ENCODE measurements at regions of chr22 and their contacts with region 1.

Region 1: GRCh38 chr22:39532215-39533071 is at the start of gene RPS19BP1:
- DNase-seq: peak; percentile 100
- H3K4me3 Mint-ChIP-seq: peak within 1 kb of the TSS; percentile 97
- H3K27ac Mint-ChIP-seq: peak within 1 kb of the TSS; percentile 91
- H3K4me1 Mint-ChIP-seq: peaks cover 50% of the 10 kb centered on the region
- H3K27me3 Mint-ChIP-seq: peaks cover 3% of the 10 kb centered on the region
- total RNA-seq, gene RPS19BP1: 96.2 and 96.9 TPM in 2 replicates

Region 2: GRCh38 chr22:39343259-39344048 is 189.0 kb before region 1 on chr22:
- intact Hi-C with region 1: loop called (anchors 2 kb)
- DNase-seq: peak; percentile 88
- H3K4me3 Mint-ChIP-seq: no peak overlapping the region
- H3K27ac Mint-ChIP-seq: no peak overlapping the region
- H3K4me1 Mint-ChIP-seq: peaks cover 4% of the 10 kb centered on the region
- H3K27me3 Mint-ChIP-seq: peaks cover 39% of the 10 kb centered on the region

Region 3: DNA sequence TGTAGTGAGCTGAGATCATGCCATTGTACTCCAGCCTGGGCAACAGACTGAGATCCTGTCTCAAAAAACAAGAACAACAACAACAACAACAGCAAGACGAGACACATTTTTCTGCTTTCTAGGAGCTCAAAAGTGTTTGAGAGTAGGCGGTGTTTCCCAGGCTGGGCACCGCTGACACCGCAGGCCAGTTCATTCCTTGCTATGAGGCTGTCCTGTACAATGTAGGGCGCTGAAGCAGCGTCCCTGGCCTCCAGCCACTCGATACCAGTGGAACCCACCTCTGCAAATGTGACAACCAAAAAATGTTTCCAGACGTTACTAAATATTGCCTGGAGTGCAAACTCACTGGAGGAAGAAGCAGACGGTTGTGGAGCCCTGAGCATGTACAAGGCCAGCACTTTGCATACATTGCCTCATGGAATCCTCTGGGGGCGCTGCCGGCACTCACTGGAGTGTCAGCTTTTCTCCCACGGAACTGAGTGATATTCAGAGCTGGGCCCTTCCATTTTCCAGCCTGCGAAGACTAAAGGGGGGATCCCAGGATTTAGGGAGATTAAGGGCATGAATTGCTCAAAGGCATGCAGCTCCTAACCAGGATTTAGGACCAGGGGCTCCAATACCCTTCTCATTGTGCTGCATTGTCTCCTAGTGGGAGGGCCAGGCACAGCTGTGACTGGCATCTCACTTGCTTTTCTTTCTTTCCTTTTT is 36.2 kb before region 1 on chr22:
- intact Hi-C with region 1: loop called (anchors 1 kb)
- DNase-seq: peak; percentile 88
- H3K4me3 Mint-ChIP-seq: no peak overlapping the region
- H3K27ac Mint-ChIP-seq: no peak overlapping the region
- H3K4me1 Mint-ChIP-seq: peaks cover 16% of the 10 kb centered on the region
- H3K27me3 Mint-ChIP-seq: peaks cover 3% of the 10 kb centered on the region

Region 4: DNA sequence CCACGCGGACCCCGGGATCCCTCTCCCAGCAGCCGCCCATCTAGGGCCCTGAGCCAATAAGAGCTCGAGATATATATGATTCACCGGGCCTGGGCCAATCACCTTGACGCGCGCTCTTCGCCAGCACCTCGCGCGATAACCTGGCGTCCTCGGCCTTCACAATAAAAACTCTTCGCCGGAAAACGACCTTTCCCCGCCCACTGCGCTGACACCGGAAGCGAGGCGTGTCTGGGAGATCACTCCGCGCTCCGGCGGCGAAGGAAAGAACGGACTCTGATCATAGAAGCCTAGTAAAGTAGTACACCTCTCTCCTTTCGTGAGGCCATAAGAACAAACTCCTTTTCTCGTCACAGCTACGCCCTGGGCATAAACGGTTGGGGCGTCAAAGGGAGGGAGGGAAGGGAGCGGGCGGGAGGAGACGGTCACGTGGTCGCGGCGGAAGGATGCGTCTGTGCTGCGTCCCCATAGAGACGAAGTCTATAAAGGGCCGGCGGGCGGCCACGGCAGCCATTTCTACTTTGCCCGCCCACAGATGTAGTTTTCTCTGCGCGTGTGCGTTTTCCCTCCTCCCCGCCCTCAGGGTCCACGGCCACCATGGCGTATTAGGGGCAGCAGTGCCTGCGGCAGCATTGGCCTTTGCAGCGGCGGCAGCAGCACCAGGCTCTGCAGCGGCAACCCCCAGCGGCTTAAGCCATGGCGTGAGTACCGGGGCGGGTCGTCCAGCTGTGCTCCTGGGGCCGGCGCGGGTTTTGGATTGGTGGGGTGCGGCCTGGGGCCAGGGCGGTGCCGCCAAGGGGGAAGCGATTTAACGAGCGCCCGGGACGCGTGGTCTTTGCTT is 12.2 kb before region 1 on chr22 and contains the start of gene ATF4:
- intact Hi-C with region 1: loop called (anchors 1 kb)
- DNase-seq: peak; percentile 99
- H3K4me3 Mint-ChIP-seq: peak within 1 kb of the TSS; percentile 93
- H3K27ac Mint-ChIP-seq: peak within 1 kb of the TSS; percentile 98
- H3K4me1 Mint-ChIP-seq: peaks cover 50% of the 10 kb centered on the region
- H3K27me3 Mint-ChIP-seq: peaks cover 2% of the 10 kb centered on the region
- total RNA-seq, gene ATF4: 392 and 393 TPM in 2 replicates

Region 5: DNA sequence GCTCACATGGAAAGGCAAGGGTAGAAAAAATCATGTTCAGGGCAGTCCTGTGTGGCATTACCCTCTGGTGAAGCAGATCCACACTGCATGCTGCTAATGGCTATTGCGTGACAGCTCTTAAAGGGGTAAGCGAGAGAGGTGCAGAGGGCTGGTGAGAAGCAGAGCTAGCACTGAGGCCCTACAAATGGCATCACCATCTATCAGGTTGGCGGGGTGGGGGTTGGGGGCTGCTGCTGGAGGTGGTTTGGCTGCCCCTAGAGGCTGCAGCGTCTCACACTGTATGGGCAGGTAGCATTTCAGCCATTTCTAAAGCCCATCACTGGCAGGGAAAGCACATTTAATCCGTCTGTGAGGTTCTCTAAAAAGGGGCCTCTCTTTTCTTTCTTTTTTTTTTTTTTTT is 410.9 kb after region 1 on chr22:
- intact Hi-C with region 1: loop called (anchors 5 kb)
- DNase-seq: no peak
- H3K4me3 Mint-ChIP-seq: peak overlapping the region; percentile 23
- H3K27ac Mint-ChIP-seq: peak overlapping the region; percentile 74
- H3K4me1 Mint-ChIP-seq: peaks cover 66% of the 10 kb centered on the region
- H3K27me3 Mint-ChIP-seq: no peaks in the 10 kb centered on the region

Region 6: GRCh38 chr22:40036591-40037225 is 504.3 kb after region 1 on chr22:
- intact Hi-C with region 1: loop called (anchors 1 kb)
- DNase-seq: peak; percentile 84
- H3K4me3 Mint-ChIP-seq: no peak overlapping the region
- H3K27ac Mint-ChIP-seq: no peak overlapping the region
- H3K4me1 Mint-ChIP-seq: no peaks in the 10 kb centered on the region
- H3K27me3 Mint-ChIP-seq: peaks cover 12% of the 10 kb centered on the region

Region 7: DNA sequence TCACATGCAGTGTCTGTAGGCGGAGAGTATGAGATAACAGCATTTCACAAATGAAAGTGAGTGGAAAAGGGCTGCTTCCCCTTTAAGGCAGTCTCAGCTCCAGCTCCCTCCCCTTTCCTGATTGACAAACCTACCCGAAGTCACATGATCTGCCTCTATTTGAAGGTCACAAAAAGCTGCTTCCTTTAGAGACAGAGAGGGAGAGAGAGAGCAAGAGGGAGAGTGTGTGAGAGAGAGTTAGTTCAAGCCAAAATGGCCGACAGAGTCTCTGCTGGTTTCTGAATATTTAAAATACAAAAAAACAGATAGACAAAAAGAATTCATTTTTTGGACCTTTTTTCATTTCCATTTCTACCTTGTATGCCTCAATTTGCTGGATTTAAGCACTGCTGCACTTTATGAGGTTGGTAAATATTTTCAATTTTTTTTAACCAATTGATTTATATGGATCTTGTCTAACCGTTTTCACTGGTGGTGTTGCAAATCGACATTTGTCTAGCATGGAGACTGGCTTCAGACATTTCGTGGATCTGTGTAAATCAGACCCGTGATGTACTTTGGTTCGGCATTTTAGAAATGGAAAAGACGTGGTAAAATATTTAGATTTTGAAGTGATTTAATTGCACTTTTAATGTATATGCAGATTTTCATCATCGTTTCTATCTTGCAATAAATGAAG is 645.4 kb after region 1 on chr22 and contains the start of gene TNRC6B:
- intact Hi-C with region 1: loop called (anchors 2 kb)
- DNase-seq: peak; percentile 95
- H3K4me3 Mint-ChIP-seq: peak within 1 kb of the TSS; percentile 80
- H3K27ac Mint-ChIP-seq: peak within 1 kb of the TSS; percentile 91
- H3K4me1 Mint-ChIP-seq: peaks cover 45% of the 10 kb centered on the region
- H3K27me3 Mint-ChIP-seq: no peaks in the 10 kb centered on the region
- total RNA-seq, gene TNRC6B: 27.3 and 31.3 TPM in 2 replicates

Measured in activated CD4-positive, alpha-beta T cell treated with anti-CD3 and anti-CD28 coated beads, Interleukin-2, amount 10 ng/mL, durations not matched to agents 24 days and 14 days (primary cell).